ENCODE measurements at regions of chr10 and their contacts with region 1.

Region 1: DNA sequence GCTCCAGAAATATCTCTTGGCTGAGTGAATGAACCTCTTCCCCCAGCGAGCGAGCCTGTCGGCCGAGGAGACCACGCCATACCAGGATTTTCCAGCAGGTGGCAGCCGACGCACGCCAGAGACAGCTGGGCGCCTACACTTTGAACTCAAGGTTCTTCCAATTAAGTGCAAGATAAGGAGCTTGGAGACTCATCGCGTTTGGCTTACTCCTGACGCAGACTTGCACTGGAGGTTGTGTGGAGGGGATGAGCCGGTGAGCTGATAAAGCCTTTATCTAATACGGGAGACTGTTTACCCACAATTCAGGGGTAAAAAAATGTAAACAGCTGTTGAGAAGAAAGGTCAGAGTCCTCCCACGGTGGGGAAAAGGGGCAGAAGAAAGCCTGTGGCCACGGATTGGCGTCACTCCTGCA is 45.9 kb upstream of the EMX2 start:
- DNase-seq: peak; percentile 82
- ATAC-seq: peak; percentile 88
- H3K4me3 Mint-ChIP-seq: no peak overlapping the region
- H3K27ac Mint-ChIP-seq: no peak overlapping the region
- H3K4me1 Mint-ChIP-seq: peaks cover 2% of the 10 kb centered on the region; the same call in 1 of the 2 replicates
- H3K27me3 Mint-ChIP-seq: peaks cover 35% of the 10 kb centered on the region
- CTCF ChIP-seq: peak; percentile 88

Region 2: DNA sequence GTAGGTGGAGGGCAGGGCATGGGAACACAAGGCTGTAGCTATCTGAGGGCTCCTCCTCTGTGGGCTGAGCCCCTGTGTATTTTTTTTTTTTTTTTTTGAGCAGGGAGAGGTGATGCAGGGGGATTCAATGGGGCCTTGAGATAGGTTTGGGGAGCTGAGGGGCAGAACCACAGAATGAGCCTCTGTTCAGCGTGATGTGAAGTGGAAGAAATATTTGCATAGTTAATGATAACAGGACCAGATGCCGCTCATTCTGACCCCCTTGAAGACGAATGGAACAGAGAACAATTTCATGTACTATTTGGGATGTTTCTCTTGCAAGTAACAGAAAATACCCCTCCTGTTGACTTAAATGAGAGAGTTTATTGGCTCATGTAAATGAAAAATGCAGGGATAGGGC is 23.8 kb before region 1 on chr10:
- CTCF ChIA-PET with region 1: no interaction called
- POLR2A ChIA-PET with region 1: no interaction called
- DNase-seq: no peak
- ATAC-seq: no peak
- H3K4me3 Mint-ChIP-seq: no peak overlapping the region
- H3K27ac Mint-ChIP-seq: no peak overlapping the region
- H3K4me1 Mint-ChIP-seq: no peaks in the 10 kb centered on the region; the same call in 1 of the 2 replicates
- H3K27me3 Mint-ChIP-seq: peaks cover 11% of the 10 kb centered on the region
- CTCF ChIP-seq: no peak

Region 3: GRCh38 chr10:117486606-117487005 is 10.0 kb before region 1 on chr10:
- CTCF ChIA-PET with region 1: interaction called, 10 read pairs
- POLR2A ChIA-PET with region 1: no interaction called
- DNase-seq: no peak
- ATAC-seq: no peak
- H3K4me3 Mint-ChIP-seq: no peak overlapping the region
- H3K27ac Mint-ChIP-seq: no peak overlapping the region
- H3K4me1 Mint-ChIP-seq: 0 out of 2 replicates have a peak, but pooled peaks cover 4% of the 10 kb centered on the region
- H3K27me3 Mint-ChIP-seq: peaks cover 7% of the 10 kb centered on the region
- CTCF ChIP-seq: no peak

Measured in WTC11 (cell line).